MCF 10A (cell line): ENCODE measurements at regions of chr6 and their contacts with region 1.

Region 1: DNA sequence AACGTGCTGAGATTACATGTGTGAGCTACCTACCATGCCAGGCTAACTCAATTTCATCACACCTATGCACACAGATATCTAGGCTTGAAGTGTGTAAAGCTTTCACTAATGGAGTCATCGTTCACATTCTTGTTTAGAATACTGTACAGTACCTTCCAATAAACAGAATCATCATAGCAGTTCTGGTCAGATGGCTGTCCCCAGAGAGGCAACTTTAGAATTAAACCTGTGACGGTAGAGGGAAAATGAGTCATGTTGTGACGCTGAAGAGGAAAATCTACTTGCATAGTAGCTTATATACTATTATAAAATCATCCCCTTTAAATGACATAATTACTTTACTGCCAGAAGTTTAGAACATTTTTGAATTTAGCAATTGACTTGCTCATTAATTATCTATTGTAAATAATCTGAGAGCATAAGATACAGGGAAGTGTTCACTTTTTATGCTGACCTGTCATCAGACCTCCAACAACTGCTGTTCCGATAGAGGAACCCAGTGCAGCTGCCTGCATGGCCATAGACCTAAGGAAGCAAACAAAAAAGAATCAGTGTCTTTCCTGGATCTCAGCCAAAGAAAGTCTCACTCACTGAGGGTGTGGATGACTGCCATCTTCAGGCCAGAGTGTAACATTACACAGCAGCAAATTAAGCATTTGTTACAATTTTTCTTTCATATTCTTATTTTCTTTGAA is 29.8 kb downstream of the RHAG start:
- DNase-seq: peak; percentile 95
- H3K4me3 Mint-ChIP-seq: no peak overlapping the region
- H3K27ac Mint-ChIP-seq: no peak overlapping the region
- H3K4me1 Mint-ChIP-seq: no peaks in the 10 kb centered on the region
- H3K27me3 Mint-ChIP-seq: no peaks in the 10 kb centered on the region
- CTCF ChIP-seq: peak; percentile 89

Region 2: DNA sequence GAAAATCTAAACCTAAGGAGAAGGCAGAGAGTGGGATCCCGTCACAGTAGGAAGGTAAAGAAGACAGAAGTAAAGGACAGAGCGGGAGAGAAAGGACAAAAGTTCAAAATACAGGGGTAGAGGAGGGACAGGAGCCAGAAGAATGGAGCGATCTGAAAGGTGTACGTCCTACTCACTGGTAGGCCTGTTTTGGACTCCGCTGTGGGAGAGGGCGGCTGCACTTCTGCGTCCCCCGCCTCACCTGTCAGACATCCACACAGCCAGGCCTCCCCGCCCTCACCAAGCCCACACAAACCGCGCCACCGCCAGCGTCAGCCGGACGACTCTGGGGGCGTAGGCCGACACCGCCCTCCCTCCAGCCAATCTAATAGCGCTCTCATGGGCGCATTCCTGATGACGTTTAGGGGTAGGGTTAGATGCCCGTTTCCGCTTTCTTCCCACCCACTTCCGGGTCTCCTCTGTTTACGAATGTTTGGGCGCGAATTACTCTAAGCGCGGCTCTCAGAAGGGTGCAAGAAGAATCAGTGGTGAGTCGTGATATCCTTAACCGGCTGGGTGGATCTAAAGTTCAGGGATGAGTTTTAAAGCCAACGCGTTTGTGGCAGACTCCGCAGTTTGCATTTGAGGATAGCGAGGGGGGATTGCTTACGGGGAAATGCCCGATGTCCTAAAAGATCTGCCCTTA is 143.8 kb before region 1 on chr6 and contains the starts of genes CENPQ and MMUT:
- CTCF ChIA-PET with region 1: interaction called, 25 read pairs
- POLR2A ChIA-PET with region 1: interaction called, 3 read pairs
- intact Hi-C with region 1: loop called (anchors 2 kb)
- DNase-seq: peak; percentile 96
- H3K4me3 Mint-ChIP-seq: peak within 1 kb of the TSS; percentile 96
- H3K27ac Mint-ChIP-seq: peak within 1 kb of the TSS; percentile 99
- H3K4me1 Mint-ChIP-seq: peaks cover 19% of the 10 kb centered on the region
- H3K27me3 Mint-ChIP-seq: no peaks in the 10 kb centered on the region
- CTCF ChIP-seq: no peak
- total RNA-seq, gene CENPQ: 3.9 and 5.4 TPM in 2 replicates
- total RNA-seq, gene MMUT: 17.8 and 22.1 TPM in 2 replicates

Region 3: DNA sequence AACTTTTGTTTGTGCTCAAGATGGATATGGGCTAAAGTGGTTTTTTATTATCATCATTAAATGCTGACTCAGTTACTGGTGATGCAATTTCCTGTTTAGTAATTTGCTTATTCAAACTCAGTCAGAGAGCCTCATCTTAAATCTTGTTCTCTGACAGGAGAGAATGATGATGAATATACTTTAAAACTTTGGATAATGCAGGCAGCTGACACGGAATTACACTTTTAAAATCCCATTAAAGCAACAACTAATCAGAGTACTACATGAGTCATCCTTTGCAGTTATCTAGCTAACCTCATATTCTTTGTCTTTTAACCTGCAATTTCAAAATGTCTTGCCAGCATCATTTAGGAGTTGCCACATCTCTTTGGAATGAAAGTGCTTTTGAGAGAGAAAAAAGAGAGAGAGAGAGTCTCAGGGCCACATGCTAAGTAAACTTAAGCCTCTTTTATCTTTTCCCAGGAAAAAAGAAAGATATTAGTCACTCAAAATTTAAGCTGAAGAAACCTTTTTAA is 65.6 kb before region 1 on chr6:
- CTCF ChIA-PET with region 1: interaction called, 18 read pairs
- POLR2A ChIA-PET with region 1: interaction called, 9 read pairs
- intact Hi-C with region 1: no loop called
- DNase-seq: peak; percentile 88
- H3K4me3 Mint-ChIP-seq: peak overlapping the region; percentile 30
- H3K27ac Mint-ChIP-seq: peak overlapping the region; percentile 89
- H3K4me1 Mint-ChIP-seq: peaks cover 8% of the 10 kb centered on the region
- H3K27me3 Mint-ChIP-seq: no peaks in the 10 kb centered on the region
- CTCF ChIP-seq: no peak

Region 4: DNA sequence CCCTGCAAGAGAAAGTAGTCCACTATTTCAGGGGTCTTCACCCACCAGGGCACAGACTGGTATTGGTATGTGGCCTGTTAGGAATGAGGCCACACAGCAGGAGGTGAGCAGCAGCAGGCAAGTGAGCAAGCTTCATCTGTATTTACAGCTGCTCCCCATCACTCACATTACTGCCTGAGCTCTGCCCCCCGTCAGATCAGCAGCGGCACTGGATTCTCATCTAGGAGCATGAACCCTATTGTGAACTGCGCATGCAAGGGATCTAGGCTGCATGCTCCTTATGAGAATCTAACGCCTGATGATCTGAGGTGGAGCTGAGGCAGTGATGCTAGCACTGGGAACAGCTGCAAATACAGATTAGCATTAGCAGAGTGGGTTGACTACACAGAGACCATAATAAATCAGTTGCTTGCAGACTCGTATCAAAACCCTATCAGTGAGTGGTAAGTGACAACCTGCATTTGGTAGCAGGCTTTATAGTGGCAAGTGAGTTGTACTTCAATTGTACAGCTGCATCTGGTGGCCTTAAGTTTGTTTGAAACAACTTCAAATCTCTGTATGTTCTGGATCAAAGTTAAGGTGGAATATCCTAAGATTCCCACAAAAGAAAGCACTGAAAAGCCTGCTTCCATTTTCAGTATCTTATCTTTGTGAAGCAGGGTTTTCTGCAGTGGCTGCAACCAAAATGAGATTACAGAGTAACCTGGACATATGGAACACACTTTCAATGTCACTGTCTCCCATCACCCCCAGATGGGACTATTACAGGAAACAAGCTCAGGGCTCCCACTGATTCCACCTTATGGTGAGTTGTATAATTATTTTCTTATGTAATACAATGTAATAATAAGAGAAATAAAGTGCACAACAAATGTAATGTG is 43.6 kb before region 1 on chr6:
- CTCF ChIA-PET with region 1: interaction called, 13 read pairs
- POLR2A ChIA-PET with region 1: interaction called, 4 read pairs
- intact Hi-C with region 1: no loop called
- DNase-seq: no peak
- H3K4me3 Mint-ChIP-seq: no peak overlapping the region
- H3K27ac Mint-ChIP-seq: no peak overlapping the region
- H3K4me1 Mint-ChIP-seq: peaks cover 12% of the 10 kb centered on the region
- H3K27me3 Mint-ChIP-seq: no peaks in the 10 kb centered on the region
- CTCF ChIP-seq: no peak

Region 5: DNA sequence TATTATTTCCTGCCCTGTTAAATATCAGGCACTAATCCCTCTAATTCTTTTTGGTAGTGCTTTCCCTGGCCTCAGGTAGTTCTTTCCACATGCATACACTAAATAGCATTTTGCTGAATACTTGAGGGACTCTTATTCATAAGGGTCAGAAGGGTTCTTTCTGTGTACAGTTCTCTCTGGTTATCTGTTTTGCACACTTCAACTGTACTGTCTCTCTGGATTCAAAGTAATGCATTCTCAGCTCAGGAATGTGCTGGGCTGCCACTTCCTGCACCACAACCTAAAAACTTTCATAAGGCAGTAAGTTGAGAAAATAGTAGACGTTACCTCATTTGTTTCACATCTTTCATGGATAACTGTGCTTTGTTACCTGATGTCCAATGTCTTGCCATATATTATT is 24.3 kb before region 1 on chr6:
- CTCF ChIA-PET with region 1: interaction called, 14 read pairs
- POLR2A ChIA-PET with region 1: interaction called, 3 read pairs
- intact Hi-C with region 1: no loop called
- DNase-seq: no peak
- H3K4me3 Mint-ChIP-seq: no peak overlapping the region
- H3K27ac Mint-ChIP-seq: no peak overlapping the region
- H3K4me1 Mint-ChIP-seq: no peaks in the 10 kb centered on the region
- H3K27me3 Mint-ChIP-seq: no peaks in the 10 kb centered on the region
- CTCF ChIP-seq: no peak

Region 6: DNA sequence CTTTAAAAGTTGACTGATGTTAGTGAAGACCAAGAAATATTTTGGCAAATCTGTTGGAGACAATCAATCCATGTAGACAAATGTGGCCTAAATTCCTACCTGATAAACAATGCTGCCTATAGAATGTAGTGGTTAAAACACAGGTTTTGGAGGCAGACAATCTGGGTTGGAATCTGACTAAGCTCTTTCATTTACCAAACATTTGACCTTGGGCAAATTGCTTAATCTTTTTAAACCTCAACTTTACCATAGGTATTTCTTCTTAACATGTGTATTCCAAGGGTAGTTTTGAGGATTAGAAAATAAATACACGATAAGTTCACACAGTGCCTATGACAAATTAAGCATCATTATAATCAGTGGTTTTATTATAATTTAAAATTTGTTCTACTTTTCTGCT is 18.3 kb after region 1 on chr6:
- CTCF ChIA-PET with region 1: interaction called, 32 read pairs
- POLR2A ChIA-PET with region 1: no interaction called
- intact Hi-C with region 1: no loop called
- DNase-seq: no peak
- H3K4me3 Mint-ChIP-seq: no peak overlapping the region
- H3K27ac Mint-ChIP-seq: no peak overlapping the region
- H3K4me1 Mint-ChIP-seq: no peaks in the 10 kb centered on the region
- H3K27me3 Mint-ChIP-seq: no peaks in the 10 kb centered on the region
- CTCF ChIP-seq: no peak